ENCODE measurements at regions of chr1 and their contacts with region 1.

Region 1: GRCh38 chr1:22755641-22756040 is 45.0 kb downstream of the EPHB2 start:
- DNase-seq: no peak

Region 2: DNA sequence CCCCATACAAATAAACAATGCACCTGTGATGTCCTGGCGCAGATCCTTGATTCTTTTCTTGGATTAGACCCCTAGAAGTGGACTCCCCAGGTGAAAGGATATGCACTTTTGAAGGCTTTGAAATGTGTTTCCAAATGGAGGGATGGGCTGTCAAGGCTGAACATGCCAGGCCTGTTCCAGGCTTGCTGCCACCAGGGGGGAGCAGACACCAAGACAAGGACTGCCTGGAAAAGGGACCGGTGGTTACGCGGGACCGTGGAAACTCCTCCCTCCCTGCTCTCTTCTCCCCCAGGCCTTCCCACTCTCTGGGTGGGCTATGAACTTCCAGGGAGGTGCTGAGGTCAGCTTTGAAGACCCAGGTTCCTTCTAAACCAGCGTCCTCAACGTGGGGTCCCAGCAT is 89.9 kb before region 1 on chr1:
- in situ Hi-C with region 1: no loop called
- DNase-seq: no peak

Region 3: DNA sequence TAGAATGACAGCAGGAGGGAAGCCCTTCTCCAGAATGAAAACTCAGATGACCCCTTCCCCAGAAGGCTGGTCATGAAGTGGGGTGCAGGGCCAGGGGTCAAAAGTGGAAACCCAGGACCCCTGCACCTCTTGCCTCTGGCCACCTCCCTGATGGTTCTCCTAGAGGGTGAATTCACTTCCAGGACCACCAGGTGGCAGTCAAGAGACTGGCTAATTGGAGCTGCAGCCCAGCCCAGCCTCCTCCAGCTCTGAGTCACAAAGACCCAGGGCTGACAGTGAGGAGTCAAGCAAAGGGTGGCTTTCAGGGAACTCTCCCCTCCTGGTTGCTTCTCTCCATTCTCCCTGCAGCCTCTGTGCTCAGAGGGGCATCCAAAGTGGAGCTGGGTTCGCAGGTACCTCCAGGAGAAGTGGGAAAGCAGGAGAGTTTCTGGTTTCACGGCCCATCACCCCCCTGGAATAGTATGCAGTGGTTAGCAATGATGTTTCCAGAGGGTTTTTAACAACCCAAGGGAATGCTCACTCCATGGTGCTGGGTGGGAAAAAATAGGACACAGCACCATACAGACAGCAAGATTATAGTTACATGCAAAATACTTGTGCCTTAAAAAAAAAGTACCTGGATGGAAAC is 51.1 kb before region 1 on chr1:
- in situ Hi-C with region 1: loop called (anchors 5 kb)
- DNase-seq: peak; percentile 80